ENCODE measurements at regions of chr5 and their contacts with region 1.

Region 1: DNA sequence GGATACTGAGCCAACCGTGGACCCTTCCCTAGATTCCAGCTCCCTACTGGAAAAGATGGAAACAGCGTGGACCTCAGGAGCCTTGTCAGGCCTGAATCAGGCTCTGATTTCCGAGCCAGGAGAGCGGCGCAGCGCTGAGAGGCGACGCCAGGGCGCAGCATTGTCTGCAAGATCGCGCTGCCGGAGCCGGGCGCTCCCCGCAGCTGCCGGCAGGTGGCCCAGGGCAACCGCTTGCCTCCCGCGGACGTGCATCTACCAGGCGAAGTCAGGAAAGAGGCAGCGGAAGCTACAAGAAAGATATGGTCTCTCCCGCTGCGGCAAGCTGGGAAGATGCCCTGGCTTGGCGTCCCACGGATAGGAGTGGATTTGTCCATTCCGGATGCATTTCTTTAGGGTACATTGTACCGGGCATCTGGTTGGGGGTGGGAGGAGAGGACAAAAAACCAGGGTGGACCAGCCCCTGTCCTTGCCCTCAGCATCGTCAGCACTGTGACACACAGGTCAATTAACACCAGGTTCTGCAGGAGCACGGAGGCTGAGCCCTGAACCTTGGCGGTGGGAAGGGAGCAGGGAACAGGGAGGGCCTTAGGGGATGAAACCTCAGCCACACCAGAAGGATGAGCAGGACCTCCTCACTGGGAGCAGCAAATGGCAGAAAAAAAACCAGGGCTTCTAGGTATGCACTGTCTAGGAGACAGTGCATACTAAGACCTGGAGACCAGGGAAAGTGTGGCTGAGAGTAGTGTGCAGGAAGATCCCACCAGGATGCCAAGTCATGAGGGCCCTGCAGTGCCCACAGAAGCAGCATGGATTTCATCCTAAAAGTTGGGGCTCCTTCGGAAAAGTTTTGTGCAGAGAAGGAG is 55.9 kb downstream of the SFXN1 start:
- DNase-seq: peak; percentile 85
- CTCF ChIP-seq: peak; percentile 99

Region 2: GRCh38 chr5:175517818-175518450 is 16.4 kb before region 1 on chr5:
- CTCF ChIA-PET with region 1: interaction called, 21 read pairs
- POLR2A ChIA-PET with region 1: no interaction called
- DNase-seq: peak; percentile 29
- CTCF ChIP-seq: no peak

Region 3: DNA sequence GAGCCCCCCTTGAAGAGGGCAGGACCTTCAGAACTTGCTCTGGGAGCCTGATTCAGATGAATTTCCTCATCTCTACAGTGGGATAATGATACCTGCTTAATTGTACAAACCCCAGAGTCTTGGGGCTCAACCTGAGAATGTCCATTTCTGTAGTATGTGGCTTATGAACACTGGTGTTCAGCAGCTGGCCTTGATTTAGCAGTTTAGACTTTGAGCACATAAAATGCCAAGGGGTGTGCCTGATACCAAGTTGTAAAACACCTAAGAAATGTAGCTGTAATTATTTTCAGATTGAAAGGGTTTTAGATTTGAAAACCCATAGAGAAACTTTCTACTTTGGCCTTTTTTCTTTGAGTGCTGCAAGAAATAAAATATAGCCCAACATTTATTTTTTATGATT is 11.0 kb before region 1 on chr5:
- CTCF ChIA-PET with region 1: interaction called, 21 read pairs
- POLR2A ChIA-PET with region 1: no interaction called
- DNase-seq: no peak
- CTCF ChIP-seq: no peak

Region 4: GRCh38 chr5:175590471-175590881 is 56.2 kb after region 1 on chr5:
- CTCF ChIA-PET with region 1: no interaction called
- POLR2A ChIA-PET with region 1: no interaction called
- DNase-seq: no peak
- CTCF ChIP-seq: no peak

Region 5: GRCh38 chr5:175700991-175701390 is 166.7 kb after region 1 on chr5:
- CTCF ChIA-PET with region 1: interaction called, 15 read pairs
- POLR2A ChIA-PET with region 1: no interaction called
- DNase-seq: no peak
- CTCF ChIP-seq: peak; percentile 25

Region 6: DNA sequence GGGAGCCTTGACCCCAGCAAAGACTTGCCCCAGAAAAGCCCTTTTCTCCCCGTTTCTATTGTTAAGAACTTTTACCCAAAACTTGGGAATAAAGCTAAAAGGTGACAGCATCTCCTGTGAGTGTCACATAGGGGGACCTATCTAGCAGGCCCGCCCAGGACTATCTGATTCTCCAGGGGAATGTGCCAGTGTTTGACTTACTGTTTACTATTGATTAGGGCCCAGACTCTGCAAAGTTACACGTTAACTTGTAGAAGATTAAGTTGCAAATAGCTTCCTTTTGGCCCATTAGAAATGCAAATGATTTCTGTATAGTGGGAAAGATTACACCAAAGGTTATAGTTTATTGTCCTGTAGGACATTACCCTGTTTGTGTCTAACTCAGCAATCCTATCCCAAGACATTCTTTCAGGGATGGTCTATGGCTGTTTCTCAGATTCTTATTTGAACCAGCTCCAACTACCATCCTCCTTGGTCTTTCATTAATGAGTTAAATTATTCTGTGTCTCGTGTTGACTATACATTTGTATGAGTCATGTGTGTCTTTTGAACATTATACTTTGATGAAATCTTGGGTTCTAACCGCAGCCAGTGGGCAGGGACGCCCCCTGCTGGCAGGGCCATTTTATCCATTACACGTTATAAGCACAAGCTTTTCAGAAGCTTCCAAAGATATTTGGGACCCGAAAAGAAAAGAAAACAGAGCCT is 184.3 kb after region 1 on chr5:
- CTCF ChIA-PET with region 1: interaction called, 20 read pairs
- POLR2A ChIA-PET with region 1: no interaction called
- DNase-seq: no peak
- CTCF ChIP-seq: peak; percentile 34